HCT116 (cell line): ENCODE measurements at regions of chr7 and their contacts with region 1.

Region 1: DNA sequence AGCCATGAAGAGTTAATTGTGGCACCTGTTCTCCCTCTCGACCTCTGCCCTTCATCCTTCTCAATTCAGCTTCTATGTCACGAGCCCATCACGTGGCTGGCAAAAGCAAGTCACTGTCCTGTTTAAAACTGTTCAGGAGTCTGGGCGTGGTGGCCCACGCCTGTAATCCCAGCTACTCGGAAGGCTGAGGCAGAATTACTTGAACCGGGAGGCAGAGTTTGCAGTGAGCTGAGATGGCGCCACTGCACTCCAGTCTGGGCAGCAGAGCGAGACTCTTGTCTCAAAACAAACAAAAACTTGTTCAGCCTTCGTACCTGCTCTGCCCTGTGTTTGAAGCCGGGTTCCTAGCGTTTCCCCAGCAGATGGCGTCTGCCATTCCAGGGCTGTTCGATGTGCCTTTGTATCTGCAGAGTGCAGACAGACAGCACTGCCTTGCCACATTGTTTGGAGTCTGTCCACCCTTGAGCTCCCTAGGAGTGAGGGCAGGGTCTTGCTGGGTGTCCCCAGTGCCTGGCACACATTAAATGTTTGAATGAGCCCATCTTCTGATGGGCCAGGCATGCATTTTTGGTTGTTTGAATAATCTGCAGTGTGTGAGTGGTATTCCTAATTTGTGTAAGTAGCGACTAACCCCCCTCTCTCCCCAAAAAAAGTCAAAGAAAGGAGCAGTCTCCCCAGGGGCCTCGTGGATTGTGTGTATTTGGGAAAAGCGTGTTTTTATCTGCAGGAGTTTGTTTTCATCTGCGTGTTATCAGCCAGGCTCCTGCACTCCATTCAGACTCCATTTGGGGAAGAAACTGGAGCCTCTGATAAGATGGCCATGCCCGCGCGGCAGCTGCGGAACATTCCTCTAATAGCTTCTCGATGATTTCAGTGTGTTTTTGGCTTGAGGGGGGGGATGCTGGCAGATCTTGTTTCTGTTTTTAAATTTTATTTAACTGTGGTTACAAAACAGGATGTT is 61.2 kb downstream of the DNAJB6 start:
- DNase-seq: no peak
- ATAC-seq: peak; percentile 90
- H3K4me3 ChIP-seq: no peak overlapping the region
- H3K27ac ChIP-seq: no peak overlapping the region
- H3K4me1 ChIP-seq: no peaks in the 10 kb centered on the region
- H3K27me3 ChIP-seq: no peaks in the 10 kb centered on the region
- CTCF ChIP-seq: peak; percentile 48 to 68 (median 61); a peak in 5 of 6 replicates
- POLR2A ChIP-seq: no peak
- RAD21 ChIP-seq: peak; percentile 50

Region 2: GRCh38 chr7:157875230-157876179 is 477.5 kb after region 1 on chr7:
- CTCF ChIA-PET with region 1: no interaction called
- POLR2A ChIA-PET with region 1: no interaction called
- RAD21 ChIA-PET with region 1: no interaction called
- intact Hi-C with region 1: loop called (anchors 1 kb)
- DNase-seq: peak; percentile 23
- ATAC-seq: peak; percentile 95
- H3K4me3 ChIP-seq: peak overlapping the region in 1 of 2 experiments; percentile 18; a peak in 1 of 4 replicates
- H3K27ac ChIP-seq: no peak overlapping the region
- H3K4me1 ChIP-seq: peaks cover 0 to 9% of the 10 kb centered on the region in 2 experiments; a peak in 2 of 4 replicates
- H3K27me3 ChIP-seq: no peaks in the 10 kb centered on the region
- CTCF ChIP-seq: peak; percentile 67 to 85 (median 84); a peak in 5 of 6 replicates
- POLR2A ChIP-seq: no peak
- RAD21 ChIP-seq: peak; percentile 90

Region 3: DNA sequence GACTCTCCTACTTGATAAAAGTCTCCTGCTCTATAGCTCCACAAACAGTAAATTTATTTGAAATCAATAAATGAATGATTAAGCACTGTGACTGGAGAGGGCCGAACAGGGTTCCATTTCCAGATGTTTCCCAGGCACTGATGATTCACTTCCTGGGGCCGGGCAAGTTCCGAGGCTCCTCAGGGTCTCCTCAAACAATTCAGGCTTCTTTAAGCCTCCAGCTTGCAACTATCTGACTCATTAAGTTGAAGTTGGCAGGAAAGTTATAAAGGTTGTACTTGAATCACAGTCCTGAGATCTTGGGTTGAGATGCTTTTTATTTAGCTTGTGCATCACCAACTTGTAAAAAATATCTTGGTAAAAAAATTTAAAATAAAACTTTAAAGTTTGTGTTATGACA is 551.7 kb after region 1 on chr7:
- CTCF ChIA-PET with region 1: no interaction called
- POLR2A ChIA-PET with region 1: no interaction called
- RAD21 ChIA-PET with region 1: no interaction called
- intact Hi-C with region 1: no loop called
- DNase-seq: peak; percentile 33
- ATAC-seq: peak; percentile 66
- H3K4me3 ChIP-seq: no peak overlapping the region
- H3K27ac ChIP-seq: no peak overlapping the region
- H3K4me1 ChIP-seq: peaks cover 2 to 12% of the 10 kb centered on the region in 2 experiments; a peak in 3 of 4 replicates
- H3K27me3 ChIP-seq: no peaks in the 10 kb centered on the region
- CTCF ChIP-seq: no peak
- POLR2A ChIP-seq: no peak
- RAD21 ChIP-seq: no peak